Activated CD4-positive, alpha-beta memory T cell treated with anti-CD3 and anti-CD28 coated beads, Interleukin-2, amount 10 ng/mL, durations not matched to agents 7 days and 5 days (primary cell): ENCODE measurements at regions of chr11 and their contacts with region 1.

Region 1: DNA sequence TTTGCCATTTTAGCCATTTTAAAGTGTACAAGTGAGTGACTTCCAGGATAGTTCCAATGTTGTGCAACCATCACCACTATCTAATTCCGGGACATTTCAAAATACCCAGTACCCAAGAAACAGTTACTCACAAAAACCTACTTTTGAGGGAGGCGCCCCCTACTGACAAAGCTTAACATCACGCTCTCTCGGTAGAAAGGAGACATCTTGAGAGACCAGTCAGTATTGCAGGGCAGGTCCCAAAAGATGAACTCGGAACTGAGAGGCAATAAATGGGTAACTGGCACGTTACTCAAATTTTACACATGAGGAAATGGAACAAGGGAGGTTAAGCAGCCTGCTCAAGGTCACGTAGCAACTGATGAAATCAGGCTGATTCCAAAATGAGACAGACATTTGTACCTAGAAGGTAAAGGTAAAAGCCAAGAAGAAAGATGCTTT is 50.0 kb upstream of the POU2AF1 start:
- DNase-seq: peak; percentile 70
- H3K4me3 Mint-ChIP-seq: no peak overlapping the region
- H3K27ac Mint-ChIP-seq: no peak overlapping the region
- H3K4me1 Mint-ChIP-seq: peaks cover 2% of the 10 kb centered on the region
- H3K27me3 Mint-ChIP-seq: peaks cover 5% of the 10 kb centered on the region

Region 2: GRCh38 chr11:111399187-111400031 is 29.7 kb before region 1 on chr11:
- CTCF ChIA-PET with region 1: no interaction called
- POLR2A ChIA-PET with region 1: no interaction called
- DNase-seq: no peak
- H3K4me3 Mint-ChIP-seq: no peak overlapping the region
- H3K27ac Mint-ChIP-seq: no peak overlapping the region
- H3K4me1 Mint-ChIP-seq: peaks cover 8% of the 10 kb centered on the region
- H3K27me3 Mint-ChIP-seq: peaks cover 3% of the 10 kb centered on the region

Region 3: DNA sequence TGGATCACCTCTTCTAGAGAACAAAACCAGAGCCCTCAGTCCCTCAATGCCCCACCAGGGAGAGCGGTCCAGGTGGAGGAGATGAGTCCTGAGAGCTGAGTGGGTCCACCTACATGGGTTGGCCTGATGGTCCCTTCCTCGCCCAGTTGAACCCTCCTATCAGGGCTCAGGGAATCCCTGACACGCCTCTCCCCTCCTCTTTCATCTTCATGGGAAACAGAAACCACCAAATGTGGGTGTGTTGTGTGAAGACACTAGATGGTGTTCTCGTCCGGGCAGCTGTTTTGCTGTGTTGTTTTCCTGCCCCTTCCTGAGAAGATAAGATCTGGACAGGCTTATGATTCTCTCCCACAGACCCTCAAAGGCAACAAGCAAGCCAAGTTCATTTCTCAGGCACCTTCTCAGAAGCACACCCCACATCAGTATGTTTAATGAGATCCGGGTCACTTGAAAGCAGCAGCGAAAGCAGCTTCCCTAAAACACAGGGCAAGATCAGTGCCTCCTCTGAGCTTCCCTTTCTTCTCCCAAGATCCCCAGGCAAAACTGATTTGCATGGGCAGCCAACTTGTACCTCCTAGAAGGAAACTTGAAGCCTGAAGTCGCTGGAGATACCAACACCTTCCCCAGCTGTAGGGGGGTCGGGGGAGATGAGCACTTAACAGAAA is 14.7 kb before region 1 on chr11:
- CTCF ChIA-PET with region 1: interaction called, 20 read pairs
- POLR2A ChIA-PET with region 1: interaction called, 3 read pairs
- DNase-seq: no peak
- H3K4me3 Mint-ChIP-seq: peak overlapping the region; percentile 8
- H3K27ac Mint-ChIP-seq: peak overlapping the region; percentile 58
- H3K4me1 Mint-ChIP-seq: peaks cover 64% of the 10 kb centered on the region
- H3K27me3 Mint-ChIP-seq: no peaks in the 10 kb centered on the region

Region 4: DNA sequence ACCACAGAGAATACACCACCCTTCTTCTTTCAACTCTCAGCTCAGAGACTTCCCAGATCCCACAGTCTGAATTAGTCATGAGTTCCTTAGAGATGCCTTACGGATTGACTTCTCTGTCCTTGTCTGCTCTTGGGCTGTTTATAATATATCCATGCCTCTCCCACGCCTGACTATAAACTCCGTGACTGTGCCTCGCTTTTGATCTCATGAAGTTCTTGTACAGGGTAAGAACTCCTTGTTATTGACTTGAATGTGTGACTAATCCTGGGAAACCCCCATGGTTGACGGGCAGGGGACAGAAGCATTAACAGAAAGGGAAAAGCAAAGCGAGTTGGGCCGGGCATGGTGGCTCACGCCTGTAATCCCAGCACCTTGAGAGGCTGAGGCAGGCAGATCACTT is 12.4 kb after region 1 on chr11:
- CTCF ChIA-PET with region 1: interaction called, 35 read pairs
- POLR2A ChIA-PET with region 1: interaction called, 5 read pairs
- DNase-seq: no peak
- H3K4me3 Mint-ChIP-seq: no peak overlapping the region
- H3K27ac Mint-ChIP-seq: no peak overlapping the region
- H3K4me1 Mint-ChIP-seq: peaks cover 30% of the 10 kb centered on the region
- H3K27me3 Mint-ChIP-seq: peaks cover 2% of the 10 kb centered on the region

Region 5: GRCh38 chr11:111446404-111447111 is 17.5 kb after region 1 on chr11:
- CTCF ChIA-PET with region 1: interaction called, 35 read pairs
- POLR2A ChIA-PET with region 1: interaction called, 3 read pairs
- DNase-seq: peak; percentile 87
- H3K4me3 Mint-ChIP-seq: no peak overlapping the region
- H3K27ac Mint-ChIP-seq: peak overlapping the region; percentile 32
- H3K4me1 Mint-ChIP-seq: peaks cover 19% of the 10 kb centered on the region
- H3K27me3 Mint-ChIP-seq: peaks cover 2% of the 10 kb centered on the region